H1 (cell line): ENCODE measurements at regions of chr16 and their contacts with region 1.

Region 1: GRCh38 chr16:23595951-23596720 is at the start of gene NDUFAB1:
- DNase-seq: peak; percentile 43 to 96
- H3K4me3 ChIP-seq: peak within 1 kb of the TSS; percentile 86 to 99 (median 99)
- H3K27ac ChIP-seq: peak within 1 kb of the TSS; percentile 65
- H3K4me1 ChIP-seq: peaks cover 2 to 9% (median 4%) of the 10 kb centered on the region in 4 experiments; a peak in 4 of 7 replicates
- H3K27me3 ChIP-seq: no peaks in the 10 kb centered on the region
- CTCF ChIP-seq: peak; percentile 87 to 98 (median 92)
- EP300 ChIP-seq: peak in 1 of 2 experiments; percentile 72; a peak in 1 of 3 replicates
- POLR2A ChIP-seq: peak in 1 of 2 experiments; percentile 72; a peak in 1 of 3 replicates
- RAD21 ChIP-seq: peak; percentile 27 to 44; a peak in 2 of 4 replicates
- total RNA-seq, gene NDUFAB1: 135 and 145 TPM in 2 replicates

Region 2: GRCh38 chr16:23608194-23608593 is 12.1 kb after region 1 on chr16:
- CTCF ChIA-PET with region 1: interaction called, 13 read pairs
- POLR2A ChIA-PET with region 1: interaction called, 5 read pairs
- DNase-seq: no peak
- H3K4me3 ChIP-seq: no peak overlapping the region
- H3K27ac ChIP-seq: no peak overlapping the region
- H3K4me1 ChIP-seq: no peaks in the 10 kb centered on the region
- H3K27me3 ChIP-seq: no peaks in the 10 kb centered on the region
- CTCF ChIP-seq: no peak
- EP300 ChIP-seq: no peak
- POLR2A ChIP-seq: no peak
- RAD21 ChIP-seq: no peak